Activated B cell treated with CpG ODN at 0.5 μM for 24 hours (primary cell): ENCODE measurements at regions of chr14 and their contacts with region 1.

Region 1: GRCh38 chr14:24114536-24115450 is at the starts of genes DCAF11 and NRL:
- DNase-seq: peak; percentile 97
- ATAC-seq: peak; percentile 83
- H3K4me3 Mint-ChIP-seq: peak within 1 kb of the TSS; percentile 99
- H3K27ac Mint-ChIP-seq: peak within 1 kb of the TSS; percentile 100
- H3K4me1 Mint-ChIP-seq: peaks cover 27% of the 10 kb centered on the region
- H3K27me3 Mint-ChIP-seq: no peaks in the 10 kb centered on the region
- CTCF ChIP-seq: no peak
- total RNA-seq, gene DCAF11: 84.3 and 86.5 TPM in 2 replicates
- total RNA-seq, gene NRL: 5.4 and 5.5 TPM in 2 replicates

Region 2: DNA sequence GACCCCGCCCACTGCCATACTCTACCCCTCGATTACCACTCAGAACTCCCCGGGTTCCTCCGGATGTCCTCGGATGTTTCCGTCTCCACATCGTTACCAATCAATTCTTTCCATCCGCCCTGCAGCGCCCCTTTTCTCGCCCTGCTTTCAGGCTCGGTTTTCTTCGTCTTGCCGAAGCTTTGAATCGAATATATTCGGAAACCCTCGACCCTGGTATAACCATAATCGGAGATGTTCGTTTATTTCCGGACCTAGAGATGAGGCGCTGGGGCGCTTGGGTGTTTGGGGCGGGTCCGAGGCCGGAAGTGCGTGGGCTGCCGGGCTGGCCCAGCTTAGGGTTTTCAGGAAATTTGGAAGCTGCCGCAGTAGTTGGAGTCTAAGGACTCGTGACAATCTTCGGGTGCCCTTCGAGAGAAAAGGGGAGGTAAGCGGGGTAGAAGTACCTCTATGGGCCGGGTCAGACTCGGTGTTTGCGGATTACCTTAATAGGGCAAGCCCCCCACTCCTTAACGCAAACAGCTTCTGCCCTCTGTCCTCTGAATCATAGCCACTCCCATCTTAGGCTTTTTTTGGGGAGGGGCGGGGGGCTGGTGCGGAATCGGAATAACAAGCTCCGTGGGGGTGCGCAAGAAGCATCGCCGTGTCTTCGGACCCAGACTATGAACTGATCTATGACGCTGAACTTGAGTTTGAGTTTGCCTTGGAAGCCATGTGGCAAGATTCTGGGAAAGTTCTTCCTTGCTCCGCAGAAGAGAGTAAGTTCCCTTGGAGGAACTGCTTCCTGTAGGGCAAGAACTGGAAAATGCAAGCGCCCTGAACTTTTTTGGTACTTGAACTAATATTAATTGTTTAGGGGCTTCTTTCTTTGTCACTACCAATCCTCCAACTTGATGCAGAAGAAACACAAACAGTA is 1019.3 kb before region 1 on chr14 and contains the start of gene C14orf119:
- CTCF ChIA-PET with region 1: no interaction called
- POLR2A ChIA-PET with region 1: interaction called, 3 read pairs
- intact Hi-C with region 1: loop called (anchors 10 kb)
- DNase-seq: peak; percentile 77
- ATAC-seq: peak; percentile 87
- H3K4me3 Mint-ChIP-seq: no peak within 1 kb of the TSS
- H3K27ac Mint-ChIP-seq: no peak within 1 kb of the TSS
- H3K4me1 Mint-ChIP-seq: peaks cover 34% of the 10 kb centered on the region
- H3K27me3 Mint-ChIP-seq: no peaks in the 10 kb centered on the region
- CTCF ChIP-seq: no peak
- total RNA-seq, gene C14orf119: 35.3 and 36.0 TPM in 2 replicates

Region 3: GRCh38 chr14:24080888-24081738 is 33.7 kb before region 1 on chr14:
- CTCF ChIA-PET with region 1: interaction called, 8 read pairs
- POLR2A ChIA-PET with region 1: interaction called, 35 read pairs
- intact Hi-C with region 1: loop called (anchors 1 kb)
- DNase-seq: peak; percentile 75
- ATAC-seq: peak; percentile 95
- H3K4me3 Mint-ChIP-seq: peak overlapping the region; percentile 82
- H3K27ac Mint-ChIP-seq: peak overlapping the region; percentile 83
- H3K4me1 Mint-ChIP-seq: peaks cover 32% of the 10 kb centered on the region
- H3K27me3 Mint-ChIP-seq: no peaks in the 10 kb centered on the region
- CTCF ChIP-seq: no peak

Region 4: DNA sequence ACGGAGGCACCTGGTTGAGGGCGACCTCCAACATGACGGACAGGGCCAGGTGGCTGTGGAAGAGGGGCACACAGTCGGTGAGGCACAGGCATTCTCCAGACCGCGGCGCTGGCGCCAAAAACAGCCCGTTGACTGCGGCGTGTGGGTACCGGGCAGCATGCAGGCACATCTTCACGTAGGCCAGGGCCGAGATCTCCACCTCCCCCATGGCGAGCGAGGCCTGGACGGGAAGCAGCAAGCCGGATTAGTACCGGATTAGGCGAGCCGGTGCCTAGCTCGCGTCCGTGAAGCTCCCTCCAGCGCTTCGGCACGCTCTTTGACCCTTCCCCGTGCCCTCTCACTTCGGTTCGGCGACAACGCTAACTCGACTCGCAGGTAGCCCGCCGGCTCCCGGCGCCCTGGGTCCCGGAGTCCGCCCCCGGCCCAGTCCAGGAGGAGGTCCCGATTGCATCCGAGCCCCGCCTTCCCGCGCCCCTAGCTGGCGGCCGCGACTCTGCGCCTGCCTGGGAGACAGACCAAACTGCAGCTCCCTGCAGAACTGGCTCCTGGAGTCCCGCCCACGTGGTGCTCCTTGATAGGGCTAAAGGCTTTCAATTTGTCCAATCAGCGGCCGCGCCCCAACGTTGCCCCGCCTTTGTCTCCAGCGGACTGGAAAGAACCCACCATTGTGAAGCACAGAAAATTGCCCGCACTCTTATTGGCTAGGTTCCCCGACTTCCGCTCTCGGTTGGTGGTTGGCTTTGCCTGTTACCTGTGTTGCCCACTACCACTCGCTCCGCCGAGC is 26.5 kb after region 1 on chr14 and contains the start of gene EMC9:
- CTCF ChIA-PET with region 1: interaction called, 28 read pairs
- POLR2A ChIA-PET with region 1: interaction called, 239 read pairs
- intact Hi-C with region 1: loop called (anchors 1 kb)
- DNase-seq: peak; percentile 92
- ATAC-seq: peak; percentile 90
- H3K4me3 Mint-ChIP-seq: peak within 1 kb of the TSS; percentile 83
- H3K27ac Mint-ChIP-seq: peak within 1 kb of the TSS; percentile 87
- H3K4me1 Mint-ChIP-seq: peaks cover 78% of the 10 kb centered on the region
- H3K27me3 Mint-ChIP-seq: no peaks in the 10 kb centered on the region
- CTCF ChIP-seq: no peak
- total RNA-seq, gene EMC9: 22.5 and 22.6 TPM in 2 replicates

Region 5: DNA sequence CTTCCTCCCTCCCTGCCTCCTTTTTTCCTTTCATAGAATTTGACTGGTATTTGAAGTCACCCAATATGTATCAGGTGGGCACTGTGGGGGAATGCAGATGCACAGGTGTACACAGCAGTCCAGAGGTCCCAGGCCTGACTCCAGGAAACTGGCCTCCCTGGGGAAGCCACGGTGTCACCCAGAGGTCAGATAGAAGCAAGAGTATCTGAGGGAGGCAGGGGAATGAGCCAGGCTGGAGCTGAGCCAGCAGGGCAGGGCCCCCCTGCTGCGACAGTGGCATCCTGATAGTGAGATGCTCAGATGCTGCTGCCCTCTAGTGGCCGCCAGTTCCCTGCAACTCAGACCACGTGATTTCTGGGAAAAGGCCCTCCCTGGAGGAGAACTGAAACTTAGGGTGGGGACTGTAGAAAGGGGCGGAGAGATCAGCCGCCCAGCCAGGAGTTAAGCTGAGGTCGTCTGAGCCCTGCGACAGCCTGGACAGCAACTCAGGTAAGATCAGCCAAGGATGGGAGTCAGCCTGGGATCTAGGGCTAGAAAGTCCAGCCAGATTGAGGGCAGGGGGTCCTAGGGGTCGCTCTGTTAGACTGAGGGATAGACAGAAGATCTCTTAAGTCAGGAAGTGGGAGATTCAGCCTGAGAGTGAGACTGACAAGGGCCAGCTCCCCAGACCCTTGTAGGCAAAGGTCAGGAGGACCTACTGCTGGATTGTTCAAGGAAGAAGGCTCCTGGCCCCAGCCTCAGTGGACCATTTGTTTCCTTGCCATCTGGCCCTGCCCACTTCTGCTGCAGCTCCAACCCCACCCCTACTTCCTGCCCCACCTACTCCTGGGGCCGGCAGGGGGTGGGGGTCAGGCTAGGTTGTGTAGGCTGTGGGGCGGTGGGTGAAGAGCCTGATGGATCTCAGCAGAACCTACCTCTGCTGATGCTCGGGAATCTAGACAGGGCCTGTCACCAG is 46.3 kb after region 1 on chr14 and contains the start of gene IRF9:
- CTCF ChIA-PET with region 1: interaction called, 45 read pairs
- POLR2A ChIA-PET with region 1: interaction called, 93 read pairs
- intact Hi-C with region 1: loop called (anchors 1 kb)
- DNase-seq: peak; percentile 90
- ATAC-seq: peak; percentile 92
- H3K4me3 Mint-ChIP-seq: peak within 1 kb of the TSS; percentile 98
- H3K27ac Mint-ChIP-seq: peak within 1 kb of the TSS; percentile 95
- H3K4me1 Mint-ChIP-seq: peaks cover 45% of the 10 kb centered on the region
- H3K27me3 Mint-ChIP-seq: no peaks in the 10 kb centered on the region
- CTCF ChIP-seq: no peak
- total RNA-seq, gene IRF9: 221 and 229 TPM in 2 replicates

Region 6: GRCh38 chr14:24215495-24216344 is 100.9 kb after region 1 on chr14 and contains the start of gene MDP1:
- CTCF ChIA-PET with region 1: interaction called, 3 read pairs
- POLR2A ChIA-PET with region 1: interaction called, 46 read pairs
- intact Hi-C with region 1: loop called (anchors 1 kb)
- DNase-seq: peak; percentile 71
- ATAC-seq: peak; percentile 75
- H3K4me3 Mint-ChIP-seq: peak within 1 kb of the TSS; percentile 93
- H3K27ac Mint-ChIP-seq: peak within 1 kb of the TSS; percentile 95
- H3K4me1 Mint-ChIP-seq: peaks cover 50% of the 10 kb centered on the region
- H3K27me3 Mint-ChIP-seq: no peaks in the 10 kb centered on the region
- CTCF ChIP-seq: no peak
- total RNA-seq, gene MDP1: 12.7 and 16.3 TPM in 2 replicates

Region 7: DNA sequence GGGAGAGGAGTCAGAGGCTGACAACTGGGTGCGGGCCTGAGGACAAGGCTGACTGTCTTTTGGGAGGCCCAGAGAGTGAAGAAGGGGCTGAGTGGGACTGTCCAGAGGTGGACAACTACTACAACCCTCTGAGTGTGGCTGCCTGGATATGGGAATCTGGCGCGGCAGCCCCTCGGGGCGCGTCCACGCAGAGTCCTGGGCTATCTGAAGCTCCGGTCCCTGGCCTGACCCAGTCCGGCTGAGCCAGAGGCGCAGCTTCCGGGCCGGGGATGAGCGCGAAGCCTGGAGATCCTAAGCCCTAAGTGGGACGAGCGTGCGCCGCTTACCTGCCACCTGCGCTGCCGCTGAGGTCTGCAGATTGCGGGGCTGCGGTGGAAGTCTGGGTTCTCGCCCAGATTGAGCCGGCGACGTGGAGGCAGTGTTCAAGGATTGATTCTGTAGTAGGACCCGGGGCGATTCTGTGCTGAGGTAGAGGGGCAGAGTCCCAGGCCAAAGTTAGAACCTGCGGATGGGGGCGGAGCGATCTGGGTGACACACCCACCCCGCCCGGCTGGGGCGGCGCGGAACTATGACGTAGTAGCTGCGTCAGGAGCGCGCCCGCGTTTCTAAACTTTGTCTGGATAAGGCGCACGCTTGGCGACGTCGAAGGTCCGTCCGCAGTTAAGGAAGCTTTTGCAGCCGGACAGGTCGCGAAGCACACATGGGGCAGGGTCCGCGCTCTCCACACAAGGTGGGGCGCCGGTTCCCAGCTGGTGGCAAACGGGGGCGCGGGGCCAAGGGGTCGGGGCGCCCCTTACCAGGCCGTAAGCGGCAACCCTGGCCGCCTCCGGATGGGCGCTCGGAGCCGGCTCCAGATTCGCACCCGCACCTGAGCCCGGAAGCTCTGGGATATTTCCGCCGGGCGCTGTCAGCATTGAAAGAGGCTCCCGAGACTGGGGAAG is 184.7 kb after region 1 on chr14 and contains the starts of genes DHRS1 and NOP9:
- CTCF ChIA-PET with region 1: interaction called, 3 read pairs
- POLR2A ChIA-PET with region 1: interaction called, 6 read pairs
- intact Hi-C with region 1: loop called (anchors 2 kb)
- DNase-seq: peak; percentile 93
- ATAC-seq: peak; percentile 78
- H3K4me3 Mint-ChIP-seq: peak within 1 kb of the TSS; percentile 95
- H3K27ac Mint-ChIP-seq: peak within 1 kb of the TSS; percentile 94
- H3K4me1 Mint-ChIP-seq: peaks cover 51% of the 10 kb centered on the region
- H3K27me3 Mint-ChIP-seq: no peaks in the 10 kb centered on the region
- CTCF ChIP-seq: no peak
- total RNA-seq, gene DHRS1: 32.5 and 33.9 TPM in 2 replicates
- total RNA-seq, gene NOP9: 30.5 and 36.4 TPM in 2 replicates